MCF 10A (cell line): ENCODE measurements at regions of chr14 and their contacts with region 1.

Region 1: GRCh38 chr14:77457522-77458290 is at the starts of genes AHSA1 and VIPAS39:
- DNase-seq: peak; percentile 99
- H3K4me3 Mint-ChIP-seq: peak within 1 kb of the TSS; percentile 96
- H3K27ac Mint-ChIP-seq: peak within 1 kb of the TSS; percentile 95
- H3K4me1 Mint-ChIP-seq: peaks cover 14% of the 10 kb centered on the region
- H3K27me3 Mint-ChIP-seq: no peaks in the 10 kb centered on the region
- CTCF ChIP-seq: no peak
- total RNA-seq, gene AHSA1: 77.7 and 78.5 TPM in 2 replicates
- total RNA-seq, gene VIPAS39: 18.7 and 19.8 TPM in 2 replicates

Region 2: GRCh38 chr14:76261371-76261811 is 1196.3 kb before region 1 on chr14:
- CTCF ChIA-PET with region 1: no interaction called
- POLR2A ChIA-PET with region 1: no interaction called
- intact Hi-C with region 1: no loop called
- DNase-seq: no peak
- H3K4me3 Mint-ChIP-seq: no peak overlapping the region
- H3K27ac Mint-ChIP-seq: no peak overlapping the region
- H3K4me1 Mint-ChIP-seq: no peaks in the 10 kb centered on the region
- H3K27me3 Mint-ChIP-seq: no peaks in the 10 kb centered on the region
- CTCF ChIP-seq: no peak

Region 3: DNA sequence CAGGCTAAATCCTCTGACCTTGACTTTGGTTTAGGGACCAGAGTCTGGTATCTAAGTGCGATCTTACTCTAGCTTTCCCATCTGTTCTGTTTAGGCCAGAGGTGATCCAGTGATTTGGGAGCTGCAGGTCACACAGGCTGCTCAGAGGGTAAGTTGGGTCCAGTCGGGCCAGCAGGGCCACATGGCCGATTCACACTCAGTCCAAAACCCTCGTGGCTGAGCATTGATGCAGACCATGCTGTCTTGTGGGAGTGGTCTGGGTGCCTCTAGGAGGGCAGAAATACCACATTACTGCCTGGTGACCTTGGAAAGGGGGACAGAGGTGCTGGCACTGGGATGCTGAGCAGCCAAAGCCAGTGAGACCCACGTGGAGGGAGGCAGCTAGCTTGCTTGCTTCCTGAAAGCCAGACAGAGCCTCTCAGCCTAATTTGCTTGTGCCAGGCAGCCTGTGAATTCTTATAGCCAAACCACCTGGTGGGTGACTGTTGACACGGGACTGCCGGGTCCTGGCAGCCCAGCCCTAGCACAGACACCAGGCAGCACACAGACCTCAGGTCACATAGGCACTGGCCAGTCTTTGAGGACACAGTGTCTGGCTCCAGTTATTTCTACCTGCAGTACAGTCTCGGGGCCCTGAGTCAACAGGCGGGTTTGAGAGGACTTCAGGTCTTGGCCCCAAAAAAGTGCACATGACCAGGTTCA is 1050.1 kb before region 1 on chr14:
- CTCF ChIA-PET with region 1: no interaction called
- POLR2A ChIA-PET with region 1: no interaction called
- intact Hi-C with region 1: no loop called
- DNase-seq: no peak
- H3K4me3 Mint-ChIP-seq: no peak overlapping the region
- H3K27ac Mint-ChIP-seq: no peak overlapping the region
- H3K4me1 Mint-ChIP-seq: no peaks in the 10 kb centered on the region
- H3K27me3 Mint-ChIP-seq: peaks cover 11% of the 10 kb centered on the region
- CTCF ChIP-seq: no peak

Region 4: DNA sequence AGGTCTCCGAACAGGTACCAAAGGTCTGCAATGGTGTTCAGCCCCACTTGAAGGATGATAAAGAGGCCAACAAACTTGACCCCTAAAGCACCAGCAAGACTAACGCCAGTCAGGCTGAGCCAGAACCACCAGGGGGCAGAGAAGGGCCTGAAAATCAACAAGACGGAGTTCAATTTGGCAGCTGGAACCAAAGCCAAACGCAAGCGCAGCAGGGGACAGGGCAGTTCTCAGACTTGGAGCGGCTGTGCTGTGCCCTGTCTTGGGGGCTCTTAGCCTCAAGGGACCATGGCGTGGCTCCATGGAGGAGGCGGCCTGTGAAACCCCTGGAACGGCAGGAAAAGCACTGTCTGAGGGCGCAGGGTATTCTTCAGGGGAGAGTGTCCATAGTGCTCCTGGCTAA is 156.6 kb before region 1 on chr14:
- CTCF ChIA-PET with region 1: no interaction called
- POLR2A ChIA-PET with region 1: interaction called, 9 read pairs
- intact Hi-C with region 1: loop called (anchors 5 kb)
- DNase-seq: peak; percentile 75
- H3K4me3 Mint-ChIP-seq: no peak overlapping the region
- H3K27ac Mint-ChIP-seq: no peak overlapping the region
- H3K4me1 Mint-ChIP-seq: peaks cover 24% of the 10 kb centered on the region
- H3K27me3 Mint-ChIP-seq: no peaks in the 10 kb centered on the region
- CTCF ChIP-seq: peak; percentile 83

Region 5: DNA sequence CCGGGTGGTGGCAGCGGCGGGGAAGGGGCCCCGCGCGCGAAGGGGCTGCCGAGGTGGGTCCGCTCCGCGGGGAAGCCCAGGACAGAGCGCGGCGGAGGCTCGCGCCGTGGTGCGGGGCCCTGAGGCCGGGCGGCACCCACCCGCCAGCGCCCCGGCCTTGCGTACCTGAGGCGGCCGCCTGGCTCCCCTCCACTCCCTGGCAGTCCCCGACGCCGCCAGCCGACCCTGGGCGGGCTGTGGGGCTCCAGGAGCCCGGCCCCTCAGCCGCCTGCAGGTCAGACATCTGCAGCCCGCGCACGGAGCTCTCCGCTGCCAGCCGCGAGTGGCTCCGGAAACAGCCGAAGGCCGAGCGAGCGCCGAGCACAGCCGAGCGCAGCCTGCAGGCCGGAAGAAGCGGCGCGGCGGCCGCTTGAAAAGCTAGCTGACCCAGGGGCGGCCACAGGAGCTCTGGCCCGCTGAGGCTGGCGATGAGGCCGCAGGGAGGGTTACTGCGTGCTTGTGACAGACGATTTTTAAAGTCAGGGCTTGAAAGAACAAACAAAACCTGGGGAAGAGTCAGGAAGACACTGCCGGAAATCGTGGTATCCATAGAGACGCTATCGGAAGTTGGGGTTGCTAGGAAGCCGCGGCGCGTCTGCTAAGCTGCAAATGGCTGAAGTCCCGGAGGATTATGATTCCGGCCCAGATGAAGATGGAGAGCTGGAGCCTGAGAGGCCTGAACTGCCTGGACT is 80.8 kb before region 1 on chr14 and contains the starts of genes SAMD15 and TMED8:
- CTCF ChIA-PET with region 1: interaction called, 3 read pairs
- POLR2A ChIA-PET with region 1: interaction called, 15 read pairs
- intact Hi-C with region 1: no loop called
- DNase-seq: peak; percentile 75
- H3K4me3 Mint-ChIP-seq: no peak within 1 kb of the TSS
- H3K27ac Mint-ChIP-seq: no peak within 1 kb of the TSS
- H3K4me1 Mint-ChIP-seq: peaks cover 12% of the 10 kb centered on the region
- H3K27me3 Mint-ChIP-seq: no peaks in the 10 kb centered on the region
- CTCF ChIP-seq: peak; percentile 13
- total RNA-seq, gene SAMD15: 0.81 and 0.86 TPM in 2 replicates
- total RNA-seq, gene TMED8: 9.3 and 12.9 TPM in 2 replicates

Region 6: GRCh38 chr14:77467801-77468200 is 10.1 kb after region 1 on chr14:
- CTCF ChIA-PET with region 1: interaction called, 10 read pairs
- POLR2A ChIA-PET with region 1: interaction called, 5 read pairs
- intact Hi-C with region 1: no loop called
- DNase-seq: no peak
- H3K4me3 Mint-ChIP-seq: no peak overlapping the region
- H3K27ac Mint-ChIP-seq: no peak overlapping the region
- H3K4me1 Mint-ChIP-seq: no peaks in the 10 kb centered on the region
- H3K27me3 Mint-ChIP-seq: no peaks in the 10 kb centered on the region
- CTCF ChIP-seq: no peak

Region 7: GRCh38 chr14:77491056-77491455 is 33.4 kb after region 1 on chr14:
- CTCF ChIA-PET with region 1: no interaction called
- POLR2A ChIA-PET with region 1: no interaction called
- intact Hi-C with region 1: no loop called
- DNase-seq: no peak
- H3K4me3 Mint-ChIP-seq: no peak overlapping the region
- H3K27ac Mint-ChIP-seq: no peak overlapping the region
- H3K4me1 Mint-ChIP-seq: no peaks in the 10 kb centered on the region
- H3K27me3 Mint-ChIP-seq: no peaks in the 10 kb centered on the region
- CTCF ChIP-seq: no peak

Region 8: GRCh38 chr14:77707724-77708408 is 250.2 kb after region 1 on chr14 and contains the starts of genes ALKBH1 and SLIRP:
- CTCF ChIA-PET with region 1: interaction called, 14 read pairs
- POLR2A ChIA-PET with region 1: interaction called, 29 read pairs
- intact Hi-C with region 1: loop called (anchors 1 kb)
- DNase-seq: peak; percentile 91
- H3K4me3 Mint-ChIP-seq: peak within 1 kb of the TSS; percentile 93
- H3K27ac Mint-ChIP-seq: peak within 1 kb of the TSS; percentile 95
- H3K4me1 Mint-ChIP-seq: peaks cover 20% of the 10 kb centered on the region
- H3K27me3 Mint-ChIP-seq: no peaks in the 10 kb centered on the region
- CTCF ChIP-seq: no peak
- total RNA-seq, gene ALKBH1: 14.4 and 19.0 TPM in 2 replicates
- total RNA-seq, gene SLIRP: 154 and 249 TPM in 2 replicates